GM10248 (cell line): ENCODE measurements at regions of chr16 and their contacts with region 1.

Region 1: DNA sequence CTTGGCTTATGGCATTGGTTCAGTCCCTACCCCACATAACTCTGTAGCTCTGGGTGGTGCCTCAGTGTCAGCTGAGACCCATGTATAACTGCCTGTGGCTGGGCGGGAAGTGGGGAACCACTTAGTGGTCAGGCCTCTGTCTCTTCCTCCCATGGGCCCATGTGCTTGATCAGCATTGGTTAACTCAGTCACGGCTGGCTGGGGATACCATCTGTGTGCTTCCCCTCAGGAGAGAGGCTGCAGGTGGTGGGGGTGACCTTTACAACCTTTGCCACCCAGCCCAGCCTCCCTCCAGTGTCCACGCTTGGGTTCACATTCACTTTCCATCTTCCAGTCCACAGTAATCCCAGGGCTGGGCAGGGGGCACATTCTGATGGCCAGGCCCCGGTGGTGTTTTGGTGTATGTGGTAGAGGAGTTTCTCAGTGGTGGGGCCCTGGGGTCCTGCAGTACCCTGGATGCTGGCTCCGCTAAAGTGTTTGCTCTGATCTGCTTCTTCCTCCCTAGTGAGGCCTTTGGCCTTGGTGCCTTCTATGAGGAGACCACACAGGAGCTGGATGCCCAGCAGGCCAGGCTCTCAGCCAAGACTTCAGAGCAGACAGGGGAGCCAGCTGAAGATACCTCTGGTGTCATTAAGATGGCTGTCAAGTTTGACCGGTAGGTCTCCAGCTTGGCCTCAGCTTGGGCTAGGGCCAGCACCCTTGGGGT is 10.2 kb upstream of the NFATC3 start:
- DNase-seq: peak; percentile 78
- CTCF ChIP-seq: no peak

Region 2: DNA sequence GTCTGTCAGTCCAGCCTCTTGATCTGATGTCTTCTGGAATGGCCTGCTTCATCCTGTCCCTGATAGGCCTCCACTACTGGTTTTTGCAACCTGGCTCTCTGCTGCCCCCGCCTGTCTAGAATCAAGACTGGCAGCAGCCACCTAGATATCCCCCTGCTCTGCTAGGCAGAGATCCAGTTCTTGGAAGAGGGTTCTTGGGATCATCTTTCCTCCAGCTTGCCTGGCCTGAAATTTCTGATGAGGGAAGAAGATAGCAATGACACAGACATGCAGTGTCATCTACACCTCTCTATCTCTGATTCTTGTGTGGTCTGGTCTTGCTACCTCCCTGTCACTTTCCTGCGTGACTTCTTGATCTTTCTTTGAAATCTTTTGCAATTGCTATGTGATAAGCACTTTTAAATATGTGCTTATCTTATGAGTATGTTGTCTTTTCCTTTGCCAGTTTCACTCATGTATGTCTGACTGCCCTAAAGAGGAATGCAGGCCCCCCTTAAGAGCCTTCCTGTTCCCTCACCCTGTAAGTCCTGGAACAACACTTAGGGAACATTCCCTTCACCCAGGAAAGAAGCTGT is 10.1 kb before region 1 on chr16:
- CTCF ChIA-PET with region 1: interaction called, 37 read pairs
- POLR2A ChIA-PET with region 1: no interaction called
- DNase-seq: peak; percentile 67
- CTCF ChIP-seq: peak; percentile 78

Region 3: DNA sequence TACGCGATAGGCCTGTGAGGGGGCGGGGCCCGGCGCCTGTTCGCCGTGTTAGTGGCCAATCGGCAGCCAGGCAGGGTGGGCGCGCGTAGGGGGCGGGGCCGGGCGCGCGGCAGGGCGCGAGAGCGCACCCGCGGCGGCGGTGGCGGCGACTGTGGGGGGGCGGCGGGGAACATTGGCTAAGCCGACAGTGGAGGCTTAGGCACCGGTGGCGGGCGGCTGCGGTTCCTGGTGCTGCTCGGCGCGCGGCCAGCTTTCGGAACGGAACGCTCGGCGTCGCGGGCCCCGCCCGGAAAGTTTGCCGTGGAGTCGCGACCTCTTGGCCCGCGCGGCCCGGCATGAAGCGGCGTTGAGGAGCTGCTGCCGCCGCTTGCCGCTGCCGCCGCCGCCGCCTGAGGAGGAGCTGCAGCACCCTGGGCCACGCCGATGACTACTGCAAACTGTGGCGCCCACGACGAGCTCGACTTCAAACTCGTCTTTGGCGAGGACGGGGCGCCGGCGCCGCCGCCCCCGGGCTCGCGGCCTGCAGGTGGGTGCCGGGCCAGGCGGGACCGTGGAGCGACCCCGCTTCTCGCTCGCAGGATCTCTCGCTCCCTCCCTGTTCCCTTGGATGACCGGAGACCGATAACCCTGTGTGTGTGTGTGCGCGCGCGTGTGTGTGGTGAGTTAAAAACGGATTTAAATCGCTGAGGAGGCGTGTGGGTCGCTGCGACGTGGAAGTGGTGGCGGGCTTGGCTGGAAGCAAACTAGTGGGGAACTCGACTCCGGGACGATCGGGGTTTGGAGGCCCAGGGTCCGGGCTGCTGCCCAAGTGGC is 10.5 kb after region 1 on chr16 and contains the start of gene NFATC3:
- CTCF ChIA-PET with region 1: interaction called, 32 read pairs
- POLR2A ChIA-PET with region 1: interaction called, 8 read pairs
- DNase-seq: peak; percentile 97
- CTCF ChIP-seq: no peak